PC-9 (cell line): ENCODE measurements at regions of chrX and their contacts with region 1.

Region 1: DNA sequence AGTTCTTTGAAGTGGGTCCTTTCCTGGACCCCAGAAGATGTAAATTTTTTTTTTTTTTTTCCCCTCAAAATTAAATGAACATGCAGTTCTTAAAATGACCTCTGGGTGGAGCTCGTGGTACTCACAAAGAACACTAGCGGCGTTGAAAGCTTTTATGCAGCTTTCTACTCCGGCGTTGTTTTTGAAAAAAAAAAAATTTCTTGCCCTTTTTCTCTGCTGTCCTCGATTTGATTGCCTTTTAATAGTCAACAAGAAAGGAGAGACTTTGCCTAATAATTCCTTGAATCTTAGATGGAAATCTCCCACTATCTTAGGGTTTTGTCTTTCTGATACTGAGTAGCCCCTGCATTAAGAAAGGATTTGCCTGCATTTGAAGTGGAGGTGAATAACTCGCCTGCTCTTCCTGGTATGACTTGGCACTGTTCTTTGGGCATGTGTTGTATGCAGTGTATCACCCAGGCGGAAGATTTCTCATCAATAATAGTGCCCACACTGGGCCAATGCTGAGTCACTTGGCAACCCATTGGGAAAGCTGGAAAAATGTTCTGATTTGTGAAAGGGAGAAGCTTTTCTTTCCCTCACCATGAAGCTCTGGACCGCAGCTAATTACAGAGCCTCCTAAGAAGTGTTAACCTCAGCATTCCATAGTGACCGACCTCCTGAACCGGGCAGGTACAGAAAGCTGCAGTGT is 104.0 kb downstream of the PHEX start:
- DNase-seq: peak; percentile 63 to 93
- H3K4me3 ChIP-seq: peak overlapping the region; percentile 47; the same call in 1 of the 2 replicates
- H3K27ac ChIP-seq: peak overlapping the region; percentile 99
- H3K4me1 ChIP-seq: peaks cover 42% of the 10 kb centered on the region
- H3K27me3 ChIP-seq: no peaks in the 10 kb centered on the region
- CTCF ChIP-seq: peak; percentile 84

Region 2: DNA sequence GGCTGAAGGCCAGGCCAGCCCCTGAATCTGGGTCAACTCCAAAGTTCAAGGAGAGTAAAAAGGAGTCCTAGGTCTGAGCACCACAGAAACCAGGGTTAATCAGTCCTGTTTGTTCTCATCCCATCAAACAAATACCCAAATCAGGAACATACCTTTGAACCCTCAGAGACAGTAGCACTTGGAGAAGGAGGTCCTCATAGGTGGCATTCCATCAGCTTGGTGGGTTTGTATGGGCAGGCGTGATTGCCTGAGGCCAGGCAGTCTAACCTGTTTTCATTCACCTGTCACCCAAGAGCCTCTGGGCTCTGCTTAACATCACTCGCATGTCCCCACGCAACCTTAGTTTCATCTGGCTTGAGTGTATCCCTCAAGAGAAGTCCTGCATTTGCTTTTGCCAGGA is 314.3 kb before region 1 on chrX:
- CTCF ChIA-PET with region 1: no interaction called
- POLR2A ChIA-PET with region 1: no interaction called
- intact Hi-C with region 1: no loop called
- DNase-seq: no peak
- H3K4me3 ChIP-seq: no peak overlapping the region
- H3K27ac ChIP-seq: no peak overlapping the region
- H3K4me1 ChIP-seq: no peaks in the 10 kb centered on the region
- H3K27me3 ChIP-seq: no peaks in the 10 kb centered on the region
- CTCF ChIP-seq: no peak

Region 3: GRCh38 chrX:22063284-22063683 is 72.9 kb before region 1 on chrX:
- CTCF ChIA-PET with region 1: no interaction called
- POLR2A ChIA-PET with region 1: no interaction called
- intact Hi-C with region 1: loop called (anchors 1 kb)
- DNase-seq: no peak
- H3K4me3 ChIP-seq: no peak overlapping the region
- H3K27ac ChIP-seq: 0 out of 2 replicates have a peak overlapping the region, but pooled peaks have one; percentile 16
- H3K4me1 ChIP-seq: peaks cover 43% of the 10 kb centered on the region
- H3K27me3 ChIP-seq: no peaks in the 10 kb centered on the region
- CTCF ChIP-seq: no peak

Region 4: GRCh38 chrX:22186165-22186564 is 50.0 kb after region 1 on chrX:
- CTCF ChIA-PET with region 1: interaction called, 11 read pairs
- POLR2A ChIA-PET with region 1: no interaction called
- intact Hi-C with region 1: no loop called
- DNase-seq: peak in 1 of 2 experiments; percentile 54
- H3K4me3 ChIP-seq: no peak overlapping the region
- H3K27ac ChIP-seq: peak overlapping the region; percentile 57
- H3K4me1 ChIP-seq: peaks cover 25% of the 10 kb centered on the region
- H3K27me3 ChIP-seq: no peaks in the 10 kb centered on the region
- CTCF ChIP-seq: no peak

Region 5: DNA sequence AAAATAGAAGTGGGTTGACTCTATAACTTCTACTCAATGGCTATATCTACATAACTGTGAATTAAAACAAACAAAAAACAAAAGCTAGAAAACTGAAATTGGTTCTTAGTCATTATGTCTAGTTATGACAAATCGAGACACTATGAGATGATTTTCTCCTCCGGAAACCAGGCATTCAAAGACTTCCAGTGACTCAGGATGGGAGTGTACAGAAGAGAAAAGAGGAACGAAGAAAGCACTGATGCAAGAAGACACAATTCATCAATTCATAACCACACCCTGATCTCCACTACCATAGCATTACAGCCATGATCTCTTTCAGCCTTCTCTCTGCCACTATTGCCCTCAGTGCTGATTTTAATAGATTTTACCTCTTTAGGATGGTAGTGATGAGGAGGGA is 390.2 kb after region 1 on chrX:
- CTCF ChIA-PET with region 1: no interaction called
- POLR2A ChIA-PET with region 1: no interaction called
- intact Hi-C with region 1: loop called (anchors 10 kb)
- DNase-seq: peak in 1 of 2 experiments; percentile 59
- H3K4me3 ChIP-seq: no peak overlapping the region
- H3K27ac ChIP-seq: peak overlapping the region; percentile 75
- H3K4me1 ChIP-seq: peaks cover 5% of the 10 kb centered on the region; the same call in 1 of the 2 replicates
- H3K27me3 ChIP-seq: no peaks in the 10 kb centered on the region
- CTCF ChIP-seq: no peak

Region 6: DNA sequence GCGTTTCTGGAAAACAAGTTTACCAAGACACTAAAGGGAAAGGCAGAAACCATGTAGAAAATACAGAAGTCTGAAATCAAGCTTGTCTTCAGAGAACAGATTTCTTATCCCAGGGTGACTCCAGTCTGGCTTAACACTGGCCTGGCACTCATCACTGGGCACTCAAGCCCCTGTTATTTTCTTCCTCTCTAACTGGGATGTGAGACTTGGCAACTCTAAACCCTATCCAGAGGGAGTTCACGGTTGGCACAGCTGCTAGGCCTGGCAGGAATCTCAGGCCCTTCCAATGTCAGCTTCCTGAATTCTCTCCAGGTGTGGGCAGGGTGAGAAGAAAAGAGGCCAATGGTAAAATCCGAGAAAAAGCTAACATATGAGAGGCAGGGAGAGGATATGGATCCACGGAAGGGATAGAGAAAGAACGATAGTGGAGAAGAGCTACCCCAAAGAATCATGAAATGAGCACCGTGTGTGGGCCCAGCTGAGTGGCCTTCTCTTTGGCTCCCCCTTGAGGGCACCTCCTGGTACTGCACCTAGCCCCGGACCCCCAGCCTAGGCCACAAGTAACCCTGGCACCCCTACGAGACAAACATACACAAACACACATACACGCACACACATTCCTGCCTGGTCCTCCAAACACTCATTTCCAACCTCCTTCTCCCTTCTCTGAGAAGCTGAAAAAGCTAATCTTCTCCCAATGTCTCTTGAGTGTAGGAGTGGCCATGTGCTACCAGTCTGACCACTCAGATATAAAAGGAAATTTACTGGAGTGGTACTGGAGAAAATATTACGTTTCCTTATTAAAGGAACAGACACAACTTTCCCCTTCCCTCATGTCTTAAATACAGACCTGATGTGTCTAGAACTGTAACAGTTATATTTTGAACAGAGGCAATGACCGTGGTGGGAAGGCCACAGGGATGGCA is 1181.9 kb after region 1 on chrX:
- CTCF ChIA-PET with region 1: no interaction called
- POLR2A ChIA-PET with region 1: no interaction called
- intact Hi-C with region 1: loop called (anchors 5 kb)
- DNase-seq: no peak
- H3K4me3 ChIP-seq: no peak overlapping the region
- H3K27ac ChIP-seq: no peak overlapping the region
- H3K4me1 ChIP-seq: no peaks in the 10 kb centered on the region
- H3K27me3 ChIP-seq: no peaks in the 10 kb centered on the region
- CTCF ChIP-seq: peak; percentile 75

Region 7: DNA sequence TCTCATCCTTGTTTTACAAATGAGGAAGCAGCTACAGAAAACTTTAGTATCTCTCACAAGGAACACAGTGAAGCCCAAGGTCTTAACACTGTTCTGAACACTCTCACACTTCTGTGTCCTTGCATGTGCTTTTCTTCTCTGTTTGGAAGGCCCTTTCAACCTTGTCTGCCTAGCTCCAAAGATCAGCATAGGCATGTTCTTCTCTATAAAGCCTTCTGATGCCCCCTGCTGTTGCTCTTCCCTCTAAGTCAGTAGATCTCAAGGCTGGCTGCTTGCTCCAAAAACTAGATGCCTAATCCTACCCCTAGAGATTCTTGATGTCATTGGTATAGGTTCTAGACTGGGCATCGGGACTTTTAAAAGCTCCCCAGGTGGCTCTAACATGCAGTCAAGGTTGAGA is 1765.7 kb after region 1 on chrX:
- CTCF ChIA-PET with region 1: interaction called, 8 read pairs
- POLR2A ChIA-PET with region 1: no interaction called
- intact Hi-C with region 1: loop called (anchors 5 kb)
- DNase-seq: peak; percentile 22 to 60
- H3K4me3 ChIP-seq: no peak overlapping the region
- H3K27ac ChIP-seq: peak overlapping the region; percentile 91
- H3K4me1 ChIP-seq: peaks cover 52% of the 10 kb centered on the region
- H3K27me3 ChIP-seq: no peaks in the 10 kb centered on the region
- CTCF ChIP-seq: peak; percentile 50